RWPE1 (cell line): ENCODE measurements at regions of chr14 and their contacts with region 1.

Region 1: GRCh38 chr14:22994762-22995275 is 12.5 kb upstream of the AJUBA start:
- DNase-seq: no peak
- H3K27ac ChIP-seq: peak overlapping the region; percentile 82
- CTCF ChIP-seq: peak; percentile 76

Region 2: GRCh38 chr14:23057757-23058653 is 63.2 kb after region 1 on chr14:
- CTCF ChIA-PET with region 1: interaction called, 13 read pairs
- POLR2A ChIA-PET with region 1: no interaction called
- DNase-seq: peak; percentile 84
- H3K27ac ChIP-seq: peak overlapping the region; percentile 95
- CTCF ChIP-seq: peak; percentile 93